Sigmoid colon (tissue), 7 donors: ENCODE measurements at regions of chr13 and their contacts with region 1.

Region 1: GRCh38 chr13:33537026-33537425 is 251.5 kb upstream of the STARD13 start:
- DNase-seq: no peak
- H3K4me3 ChIP-seq: peak overlapping the region in 3 of 4 donors; percentile 5 to 8 (median 8)
- H3K27ac ChIP-seq: peak overlapping the region; percentile 18 to 96 (median 93)
- H3K4me1 ChIP-seq: peaks cover 0 to 72% (median 55%) of the 10 kb centered on the region in 4 donors
- H3K27me3 ChIP-seq: no peaks in the 10 kb centered on the region
- CTCF ChIP-seq: no peak
- EP300 ChIP-seq: no peak
- POLR2A ChIP-seq: no peak

Region 2: GRCh38 chr13:33454844-33455705 is 82.0 kb before region 1 on chr13:
- intact Hi-C with region 1: loop called (anchors 5 kb)
- DNase-seq: no peak
- H3K4me3 ChIP-seq: no peak overlapping the region
- H3K27ac ChIP-seq: peak overlapping the region in 3 of 4 donors; percentile 53 to 73 (median 69)
- H3K4me1 ChIP-seq: peaks cover 0 to 44% (median 32%) of the 10 kb centered on the region in 4 donors
- H3K27me3 ChIP-seq: no peaks in the 10 kb centered on the region
- CTCF ChIP-seq: no peak
- EP300 ChIP-seq: no peak
- POLR2A ChIP-seq: no peak

Region 3: GRCh38 chr13:33690354-33690753 is 153.3 kb after region 1 on chr13:
- intact Hi-C with region 1: no loop called
- DNase-seq: no peak
- H3K4me3 ChIP-seq: no peak overlapping the region
- H3K27ac ChIP-seq: no peak overlapping the region
- H3K4me1 ChIP-seq: no peaks in the 10 kb centered on the region
- H3K27me3 ChIP-seq: no peaks in the 10 kb centered on the region
- CTCF ChIP-seq: no peak
- EP300 ChIP-seq: no peak
- POLR2A ChIP-seq: no peak